IMR-90 (cell line): ENCODE measurements at regions of chr6 and their contacts with region 1.

Region 1: DNA sequence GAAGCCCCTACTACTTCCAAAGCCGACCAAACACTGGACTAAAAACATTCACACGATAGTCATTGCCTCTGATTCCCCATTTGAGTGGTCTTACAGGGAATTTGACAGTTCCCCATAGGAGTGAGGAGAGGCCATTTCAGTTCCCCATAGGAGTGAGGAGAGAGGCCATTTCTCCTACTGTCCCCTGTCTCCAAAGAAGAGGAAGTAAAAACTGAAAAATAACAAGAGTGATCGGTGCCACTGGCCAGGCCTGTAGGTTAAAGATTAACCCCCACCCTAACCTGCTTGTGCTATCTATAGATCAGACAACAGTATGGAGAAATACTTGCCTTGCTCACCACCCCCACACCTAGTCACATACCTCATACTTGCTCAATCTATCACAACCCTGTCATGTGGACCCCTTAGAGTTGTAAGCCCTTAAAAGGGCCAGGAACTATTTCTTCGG is 204.0 kb upstream of the MOCS1 start:
- DNase-seq: no peak
- ATAC-seq: no peak
- H3K4me3 ChIP-seq: no peak overlapping the region
- H3K27ac ChIP-seq: no peak overlapping the region
- H3K4me1 ChIP-seq: no peaks in the 10 kb centered on the region
- H3K27me3 ChIP-seq: no peaks in the 10 kb centered on the region
- CTCF ChIP-seq: no peak
- POLR2A ChIP-seq: no peak
- RAD21 ChIP-seq: no peak

Region 2: DNA sequence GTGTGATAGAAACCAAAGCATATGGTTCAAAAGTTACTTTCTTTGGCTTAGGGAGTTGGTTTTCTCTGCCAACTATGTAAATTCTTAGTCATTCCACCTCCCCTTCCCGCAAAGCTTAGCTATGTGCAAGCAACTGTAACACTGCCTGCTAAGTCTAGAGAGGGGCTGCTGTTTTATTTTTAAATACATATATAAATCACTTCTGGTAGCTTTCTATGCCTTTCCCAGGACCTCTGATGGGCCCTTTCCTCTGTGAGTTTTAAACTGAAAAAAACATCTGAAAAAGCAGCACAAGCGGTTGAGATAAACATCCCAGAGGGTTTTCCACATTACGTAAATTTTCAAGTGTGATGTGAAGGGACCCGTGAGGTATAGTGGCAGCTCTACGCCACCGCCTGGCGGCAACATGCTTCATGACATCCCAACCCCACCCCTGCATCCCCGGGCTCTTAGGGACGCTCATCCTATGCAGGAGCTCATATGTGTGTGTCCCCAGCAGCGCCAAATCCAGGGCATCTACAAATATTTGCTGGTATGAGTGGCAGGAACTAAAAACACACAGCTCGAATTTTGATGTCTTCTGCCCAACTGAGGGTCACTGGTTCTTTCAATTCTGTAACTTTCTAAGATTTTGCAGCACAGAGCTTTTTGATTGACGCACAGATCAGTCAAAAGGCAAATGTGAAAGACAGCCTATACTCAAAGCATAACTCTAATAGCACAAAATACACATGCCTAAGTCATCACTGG is 1036.1 kb before region 1 on chr6:
- CTCF ChIA-PET with region 1: no interaction called
- POLR2A ChIA-PET with region 1: no interaction called
- dilution Hi-C with region 1: no loop called
- in situ Hi-C with region 1: no loop called
- intact Hi-C with region 1: no loop called
- DNase-seq: peak; percentile 84
- ATAC-seq: peak; percentile 96
- H3K4me3 ChIP-seq: no peak overlapping the region
- H3K27ac ChIP-seq: peak overlapping the region; percentile 41; the same call in 1 of the 2 replicates
- H3K4me1 ChIP-seq: peaks cover 3% of the 10 kb centered on the region; the same call in 1 of the 2 replicates
- H3K27me3 ChIP-seq: no peaks in the 10 kb centered on the region
- CTCF ChIP-seq: peak; percentile 49
- POLR2A ChIP-seq: no peak
- RAD21 ChIP-seq: peak; percentile 29; the same call in 1 of the 2 replicates

Region 3: DNA sequence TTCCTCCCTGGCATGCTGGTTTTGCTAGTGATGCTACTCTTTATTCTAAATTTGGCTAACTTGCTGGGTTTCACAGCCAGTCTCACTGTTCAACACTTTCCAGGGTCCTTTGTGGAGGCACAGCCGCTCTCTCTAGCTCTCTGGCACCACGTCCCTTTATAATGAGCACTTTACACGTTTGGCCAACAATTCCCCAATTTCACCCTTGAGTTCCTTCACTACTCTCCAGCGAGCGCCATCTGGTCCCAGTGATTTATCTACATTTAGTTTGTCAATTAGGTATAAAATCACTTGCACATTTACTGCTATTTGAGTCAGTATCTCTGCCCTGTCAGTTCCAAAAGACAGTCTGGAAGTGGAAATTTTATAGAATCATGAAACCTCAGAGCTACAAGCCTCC is 37.9 kb after region 1 on chr6:
- CTCF ChIA-PET with region 1: no interaction called
- POLR2A ChIA-PET with region 1: no interaction called
- dilution Hi-C with region 1: no loop called
- in situ Hi-C with region 1: no loop called
- intact Hi-C with region 1: loop called (anchors 1 kb)
- DNase-seq: no peak
- ATAC-seq: no peak
- H3K4me3 ChIP-seq: no peak overlapping the region
- H3K27ac ChIP-seq: no peak overlapping the region
- H3K4me1 ChIP-seq: no peaks in the 10 kb centered on the region
- H3K27me3 ChIP-seq: no peaks in the 10 kb centered on the region
- CTCF ChIP-seq: no peak
- POLR2A ChIP-seq: no peak
- RAD21 ChIP-seq: no peak

Region 4: GRCh38 chr6:40444811-40445210 is 306.5 kb after region 1 on chr6:
- CTCF ChIA-PET with region 1: no interaction called
- POLR2A ChIA-PET with region 1: no interaction called
- dilution Hi-C with region 1: no loop called
- in situ Hi-C with region 1: no loop called
- intact Hi-C with region 1: no loop called
- DNase-seq: no peak
- ATAC-seq: no peak
- H3K4me3 ChIP-seq: no peak overlapping the region
- H3K27ac ChIP-seq: no peak overlapping the region
- H3K4me1 ChIP-seq: no peaks in the 10 kb centered on the region
- H3K27me3 ChIP-seq: no peaks in the 10 kb centered on the region
- CTCF ChIP-seq: no peak
- POLR2A ChIP-seq: no peak
- RAD21 ChIP-seq: no peak

Region 5: GRCh38 chr6:40506954-40507353 is 368.7 kb after region 1 on chr6:
- CTCF ChIA-PET with region 1: no interaction called
- POLR2A ChIA-PET with region 1: no interaction called
- dilution Hi-C with region 1: no loop called
- in situ Hi-C with region 1: no loop called
- intact Hi-C with region 1: no loop called
- DNase-seq: no peak
- ATAC-seq: no peak
- H3K4me3 ChIP-seq: no peak overlapping the region
- H3K27ac ChIP-seq: no peak overlapping the region
- H3K4me1 ChIP-seq: no peaks in the 10 kb centered on the region
- H3K27me3 ChIP-seq: no peaks in the 10 kb centered on the region
- CTCF ChIP-seq: no peak
- POLR2A ChIP-seq: no peak
- RAD21 ChIP-seq: no peak